ENCODE measurements at regions of chr3 and their contacts with region 1.

Region 1: DNA sequence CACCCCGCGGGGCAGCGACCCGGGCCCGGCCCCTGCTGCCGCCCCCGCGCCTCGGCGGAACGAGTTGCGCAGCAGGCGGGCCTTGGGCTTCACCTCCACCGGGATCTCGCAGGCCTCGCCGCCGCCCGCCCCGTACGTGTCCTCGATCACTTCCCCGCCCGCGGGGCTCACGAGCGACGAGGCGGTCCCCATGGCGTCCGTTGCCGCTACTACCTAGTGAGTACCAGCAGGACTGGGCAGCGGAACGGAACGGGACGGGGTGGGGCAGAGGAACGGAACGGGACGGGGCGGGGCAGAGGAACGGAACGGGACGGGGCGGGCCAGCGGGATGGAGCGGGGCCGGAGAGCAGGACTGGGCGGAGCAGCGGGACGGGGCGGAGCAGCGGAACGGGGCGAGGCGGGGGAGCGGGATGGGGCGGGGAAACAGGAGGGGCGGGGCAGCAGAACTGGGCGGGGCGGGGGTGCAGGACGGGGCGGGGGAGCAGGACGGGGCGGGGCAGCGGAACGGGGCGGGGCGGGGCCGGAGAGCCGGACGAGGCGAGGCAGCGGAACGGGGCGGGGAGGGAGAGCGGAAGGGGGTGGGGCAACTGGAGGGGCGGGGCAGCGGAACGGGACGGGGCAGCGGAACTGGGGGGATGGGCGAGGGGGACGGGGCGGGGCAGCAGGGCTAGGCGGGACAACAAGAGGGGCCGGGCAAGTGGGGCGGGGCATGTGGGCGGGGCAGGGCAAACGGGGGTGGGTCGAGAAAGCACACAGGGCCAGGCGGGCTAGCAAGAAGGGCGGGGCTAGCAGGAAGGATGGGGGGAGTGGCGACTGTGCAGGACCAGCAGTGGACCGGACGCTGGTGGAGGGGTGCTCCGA is at the start of gene NPHP3:
- DNase-seq: peak; percentile 100
- ATAC-seq: peak; percentile 86
- H3K4me3 Mint-ChIP-seq: peak within 1 kb of the TSS; percentile 90
- H3K27ac Mint-ChIP-seq: peak within 1 kb of the TSS; percentile 84
- H3K4me1 Mint-ChIP-seq: peaks cover 40% of the 10 kb centered on the region
- H3K27me3 Mint-ChIP-seq: no peaks in the 10 kb centered on the region
- total RNA-seq, gene NPHP3: 11.8 to 11.9 TPM

Region 2: DNA sequence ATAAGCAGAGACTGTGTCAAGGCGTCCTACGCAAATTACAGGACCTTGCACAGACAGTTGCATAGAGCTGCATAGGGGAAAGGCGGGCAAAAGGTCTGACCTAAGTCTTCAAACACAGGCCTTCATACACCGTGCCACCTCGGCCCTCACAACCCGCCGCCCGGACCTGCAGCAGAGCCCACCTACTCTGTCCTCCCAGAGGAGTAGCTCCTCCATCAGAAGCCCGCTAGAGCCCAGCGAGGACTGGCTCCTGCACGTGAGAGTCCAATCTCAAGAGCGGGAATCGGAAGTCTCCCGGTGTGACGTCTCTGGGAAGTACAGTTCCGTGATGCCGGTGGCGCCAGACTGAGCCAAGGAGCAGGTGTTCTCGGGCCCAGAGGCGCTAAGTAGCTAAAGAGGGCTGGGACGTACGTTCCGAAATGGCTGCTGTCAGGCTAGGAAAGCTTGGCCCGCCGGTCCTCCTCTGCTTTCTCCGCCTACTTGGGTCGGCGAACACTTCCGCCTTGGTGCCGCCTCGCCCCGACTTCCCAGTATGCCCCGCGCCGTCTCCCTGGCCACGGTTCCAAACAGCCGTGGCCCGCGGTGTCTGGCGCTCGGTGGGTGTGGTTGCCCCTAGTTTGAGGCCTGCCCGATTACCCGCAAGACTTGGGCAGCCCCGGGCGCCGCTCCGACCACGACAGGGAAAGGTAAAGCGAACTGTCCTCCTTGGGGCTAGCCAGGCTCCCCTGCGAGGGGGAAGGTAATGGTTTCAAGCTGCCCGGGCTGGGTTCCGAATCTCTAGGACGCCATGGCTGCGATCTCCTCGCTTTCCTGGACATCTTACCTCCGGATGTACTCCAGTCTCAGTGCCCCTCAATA is 1695.8 kb before region 1 on chr3 and contains the starts of genes ASTE1 and NEK11:
- CTCF ChIA-PET with region 1: no interaction called
- POLR2A ChIA-PET with region 1: no interaction called
- intact Hi-C with region 1: loop called in 1 of 2 experiments (anchors 5 kb)
- DNase-seq: peak; percentile 95
- ATAC-seq: peak; percentile 98
- H3K4me3 Mint-ChIP-seq: peak within 1 kb of the TSS; percentile 90
- H3K27ac Mint-ChIP-seq: peak within 1 kb of the TSS; percentile 96
- H3K4me1 Mint-ChIP-seq: peaks cover 46% of the 10 kb centered on the region
- H3K27me3 Mint-ChIP-seq: no peaks in the 10 kb centered on the region
- total RNA-seq, gene ASTE1: 8.2 to 9.1 TPM
- total RNA-seq, gene NEK11: 1.0 to 1.3 TPM

Region 3: DNA sequence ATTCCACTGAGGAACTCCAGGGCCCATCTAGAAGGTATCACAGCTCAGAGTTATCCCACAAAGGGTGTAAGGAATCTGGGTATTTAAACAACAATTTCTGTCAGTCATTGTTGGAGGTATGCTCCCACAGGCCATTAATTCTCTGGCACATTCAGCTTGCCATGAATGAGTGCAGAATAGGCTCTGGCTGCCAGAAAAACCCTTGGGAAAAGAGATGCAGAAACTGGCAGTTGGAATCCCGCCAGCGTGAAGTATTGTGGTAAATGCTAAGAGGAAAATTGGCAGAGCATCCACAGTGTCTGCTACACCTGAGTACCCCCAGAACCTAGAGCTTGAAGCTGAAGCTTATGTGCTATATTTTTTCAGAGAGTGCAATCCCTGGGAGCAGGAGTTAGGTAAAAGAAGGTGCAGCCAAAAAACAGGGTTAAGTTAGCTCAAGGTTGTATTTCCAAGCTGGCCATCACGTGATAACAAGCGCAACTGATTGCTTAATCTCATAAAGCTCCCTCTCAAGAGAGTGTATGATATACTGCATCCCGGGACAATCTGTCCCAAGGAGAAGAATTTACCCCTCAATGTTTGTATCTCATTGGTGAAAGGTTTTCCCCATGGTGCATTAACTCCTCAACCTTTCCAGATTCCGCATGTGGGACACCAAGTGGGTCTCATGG is 499.4 kb before region 1 on chr3:
- CTCF ChIA-PET with region 1: no interaction called
- POLR2A ChIA-PET with region 1: no interaction called
- intact Hi-C with region 1: no loop called
- DNase-seq: no peak
- ATAC-seq: no peak
- H3K4me3 Mint-ChIP-seq: no peak overlapping the region
- H3K27ac Mint-ChIP-seq: no peak overlapping the region
- H3K4me1 Mint-ChIP-seq: no peaks in the 10 kb centered on the region
- H3K27me3 Mint-ChIP-seq: peaks cover 3% of the 10 kb centered on the region

Region 4: DNA sequence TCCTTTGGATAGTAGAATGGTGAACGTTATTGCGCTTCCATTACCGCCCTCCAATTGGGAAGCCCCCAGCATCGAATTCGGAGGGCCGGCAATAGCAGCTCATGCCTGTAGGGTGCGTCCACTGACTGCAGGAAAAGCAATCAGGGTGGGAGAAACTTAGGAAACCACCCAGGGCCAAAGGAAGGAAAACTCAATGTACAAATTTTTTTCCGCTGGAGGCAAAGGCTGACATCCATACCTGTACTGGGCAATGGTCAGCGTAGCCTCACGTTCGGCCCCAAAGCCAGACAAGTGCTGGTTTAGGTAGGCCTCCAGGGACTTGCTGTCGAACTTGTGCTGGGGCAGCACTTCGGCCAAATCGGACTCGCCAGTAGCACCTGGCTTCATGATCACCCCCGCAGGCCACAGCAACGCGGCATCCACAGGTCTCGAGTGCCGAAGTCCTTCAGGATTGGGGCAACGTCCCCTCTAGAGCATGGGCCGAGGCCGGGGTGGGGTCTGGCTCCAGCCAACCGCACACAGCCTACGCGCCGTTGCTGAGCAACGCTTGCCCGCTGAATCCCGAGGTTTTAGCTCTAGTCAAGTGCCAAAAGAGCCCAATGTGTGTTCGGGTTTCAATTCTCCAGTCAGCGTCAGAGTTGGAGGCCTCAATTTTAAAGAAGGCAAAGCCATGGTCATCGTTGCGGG is 62.9 kb before region 1 on chr3 and contains the start of gene ACAD11:
- CTCF ChIA-PET with region 1: no interaction called
- POLR2A ChIA-PET with region 1: no interaction called
- intact Hi-C with region 1: loop called (anchors 1 to 2 kb)
- DNase-seq: peak; percentile 66
- ATAC-seq: peak; percentile 36
- H3K4me3 Mint-ChIP-seq: peak within 1 kb of the TSS; percentile 96
- H3K27ac Mint-ChIP-seq: peak within 1 kb of the TSS; percentile 98
- H3K4me1 Mint-ChIP-seq: peaks cover 51% of the 10 kb centered on the region
- H3K27me3 Mint-ChIP-seq: no peaks in the 10 kb centered on the region
- total RNA-seq, gene ACAD11: 16.1 to 16.9 TPM

Region 5: DNA sequence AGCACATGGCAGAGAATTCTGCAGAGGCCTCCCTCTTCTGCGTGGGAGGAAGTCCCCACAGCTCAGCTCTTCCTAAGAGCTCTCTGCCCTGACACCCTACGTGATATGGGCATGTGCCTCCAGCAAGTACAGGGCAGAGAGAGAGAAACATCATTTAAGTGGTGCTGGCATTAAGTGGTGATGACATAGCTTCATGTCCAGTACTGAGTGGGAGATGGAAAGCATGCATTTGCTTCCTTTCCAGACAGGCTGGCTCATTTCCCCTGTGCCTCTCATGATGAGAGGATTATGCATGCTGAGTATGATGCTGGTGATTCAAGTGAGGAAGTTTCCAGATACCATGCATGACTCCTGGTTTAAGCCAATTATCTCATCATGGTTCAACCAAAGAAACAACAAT is 704.3 kb after region 1 on chr3:
- CTCF ChIA-PET with region 1: interaction called, 16 read pairs
- POLR2A ChIA-PET with region 1: no interaction called
- intact Hi-C with region 1: loop called (anchors 1 kb)
- DNase-seq: no peak
- ATAC-seq: peak; percentile 68
- H3K4me3 Mint-ChIP-seq: no peak overlapping the region
- H3K27ac Mint-ChIP-seq: no peak overlapping the region
- H3K4me1 Mint-ChIP-seq: peaks cover 6% of the 10 kb centered on the region
- H3K27me3 Mint-ChIP-seq: no peaks in the 10 kb centered on the region

Region 6: GRCh38 chr3:133521946-133522345 is 799.6 kb after region 1 on chr3:
- CTCF ChIA-PET with region 1: no interaction called
- POLR2A ChIA-PET with region 1: no interaction called
- intact Hi-C with region 1: no loop called
- DNase-seq: no peak
- ATAC-seq: no peak
- H3K4me3 Mint-ChIP-seq: no peak overlapping the region
- H3K27ac Mint-ChIP-seq: no peak overlapping the region
- H3K4me1 Mint-ChIP-seq: no peaks in the 10 kb centered on the region
- H3K27me3 Mint-ChIP-seq: no peaks in the 10 kb centered on the region

Region 7: GRCh38 chr3:133661454-133662277 is 939.3 kb after region 1 on chr3 and contains the start of gene TOPBP1:
- CTCF ChIA-PET with region 1: no interaction called
- POLR2A ChIA-PET with region 1: interaction called, 4 read pairs
- intact Hi-C with region 1: loop called (anchors 1 to 5 kb)
- DNase-seq: peak; percentile 94
- ATAC-seq: peak; percentile 85
- H3K4me3 Mint-ChIP-seq: peak within 1 kb of the TSS; percentile 91
- H3K27ac Mint-ChIP-seq: peak within 1 kb of the TSS; percentile 98
- H3K4me1 Mint-ChIP-seq: peaks cover 33% of the 10 kb centered on the region
- H3K27me3 Mint-ChIP-seq: no peaks in the 10 kb centered on the region
- total RNA-seq, gene TOPBP1: 80.9 to 94.6 TPM

Region 8: DNA sequence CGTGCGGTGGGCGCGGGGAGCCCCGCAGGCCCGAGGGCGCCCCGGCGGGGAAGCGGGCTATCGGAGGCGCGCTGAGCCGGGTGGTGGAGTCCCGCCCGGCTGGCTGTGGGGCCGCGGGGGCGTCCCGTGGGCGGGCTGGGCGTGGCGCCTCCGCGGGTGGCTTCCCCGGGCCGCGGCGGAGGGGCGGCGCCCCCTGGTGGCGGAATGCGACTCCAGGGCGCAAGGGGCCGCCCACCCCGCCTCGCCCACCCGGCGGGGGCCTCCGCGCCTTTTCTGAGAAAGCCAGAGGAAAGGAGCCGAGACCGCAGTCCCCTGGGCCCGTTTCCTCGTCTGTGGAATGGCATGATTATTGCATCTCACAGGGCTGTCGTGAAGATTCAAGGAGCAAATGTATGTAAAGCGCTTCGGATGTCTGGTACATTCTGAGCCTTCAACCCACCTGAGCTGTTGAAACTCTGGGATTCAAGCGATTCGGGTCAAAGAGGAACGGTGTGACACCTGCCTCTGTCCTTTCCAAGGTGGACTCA is 1205.2 kb after region 1 on chr3:
- CTCF ChIA-PET with region 1: no interaction called
- POLR2A ChIA-PET with region 1: no interaction called
- intact Hi-C with region 1: loop called in 1 of 2 experiments (anchors 2 kb)
- DNase-seq: peak; percentile 83
- ATAC-seq: peak; percentile 82
- H3K4me3 Mint-ChIP-seq: peak overlapping the region; percentile 38
- H3K27ac Mint-ChIP-seq: no peak overlapping the region
- H3K4me1 Mint-ChIP-seq: peaks cover 6% of the 10 kb centered on the region
- H3K27me3 Mint-ChIP-seq: peaks cover 16% of the 10 kb centered on the region

Measured in activated CD4-positive, alpha-beta T cell treated with anti-CD3 and anti-CD28 coated beads for 36 hours (primary cell).